ENCODE measurements at regions of chr12 and their contacts with region 1.

Region 1: GRCh38 chr12:15590180-15590826 is 198.9 kb downstream of the EPS8 start:
- DNase-seq: peak; percentile 55 to 64
- H3K4me3 ChIP-seq: peak overlapping the region; percentile 35; the same call in 1 of the 2 replicates
- H3K27ac ChIP-seq: no peak overlapping the region
- H3K4me1 ChIP-seq: peaks cover 8% of the 10 kb centered on the region; the same call in 1 of the 2 replicates
- H3K27me3 ChIP-seq: no peaks in the 10 kb centered on the region
- CTCF ChIP-seq: peak; percentile 92

Region 2: GRCh38 chr12:15636060-15636890 is 46.0 kb after region 1 on chr12:
- CTCF ChIA-PET with region 1: no interaction called
- POLR2A ChIA-PET with region 1: no interaction called
- intact Hi-C with region 1: loop called (anchors 2 kb)
- DNase-seq: peak in 1 of 2 experiments; percentile 14
- H3K4me3 ChIP-seq: no peak overlapping the region
- H3K27ac ChIP-seq: peak overlapping the region; percentile 53
- H3K4me1 ChIP-seq: 0 out of 2 replicates have a peak, but pooled peaks cover 3% of the 10 kb centered on the region
- H3K27me3 ChIP-seq: no peaks in the 10 kb centered on the region
- CTCF ChIP-seq: no peak

Measured in PC-9 (cell line).